Mucosa of descending colon (tissue), 3 donors: ENCODE measurements at regions of chr2 and their contacts with region 1.

Region 1: DNA sequence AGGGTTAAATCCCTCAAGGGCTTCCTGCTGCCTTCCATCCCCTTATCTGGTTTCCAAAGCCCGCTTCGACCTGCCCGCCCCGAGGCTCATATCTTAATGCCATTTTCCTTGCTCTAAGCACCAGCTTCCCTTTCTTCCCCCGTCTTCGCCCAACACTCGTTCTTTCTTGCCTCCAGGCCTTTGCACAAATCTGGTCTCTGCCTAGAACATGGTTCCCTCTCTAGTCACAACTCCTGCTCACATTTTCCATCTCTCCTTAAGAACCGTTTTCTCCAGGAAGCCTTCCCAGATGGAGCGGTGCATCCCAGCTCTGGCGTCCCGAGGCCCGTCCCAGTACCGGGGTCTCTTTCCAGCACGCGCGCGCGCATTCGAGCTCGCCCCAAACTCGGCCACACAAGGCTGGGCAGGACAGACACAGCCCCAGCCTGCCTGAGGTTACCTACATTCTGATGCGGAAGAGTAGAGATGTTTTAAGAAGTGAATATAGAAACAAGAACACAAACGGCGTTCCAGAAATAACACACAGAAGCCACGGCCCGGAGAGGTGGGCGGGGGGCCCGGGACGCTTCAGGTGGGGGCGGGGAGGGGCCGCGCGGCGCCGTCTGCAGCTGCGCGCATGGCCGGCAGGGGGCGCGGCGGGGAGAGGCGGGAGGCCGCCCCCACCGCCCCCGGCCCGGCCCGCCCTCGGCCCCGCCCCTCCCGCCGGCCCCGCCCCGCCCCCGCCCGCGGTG is at the start of gene DGKD:
- DNase-seq: peak; percentile 74 to 83 (median 82)
- ATAC-seq: peak; percentile 87
- H3K4me3 ChIP-seq: peak within 1 kb of the TSS; percentile 44
- H3K4me1 ChIP-seq: peaks cover 34% of the 10 kb centered on the region
- CTCF ChIP-seq: no peak
- total RNA-seq, gene DGKD: 81.8 to 159 (median 102) TPM

Region 2: DNA sequence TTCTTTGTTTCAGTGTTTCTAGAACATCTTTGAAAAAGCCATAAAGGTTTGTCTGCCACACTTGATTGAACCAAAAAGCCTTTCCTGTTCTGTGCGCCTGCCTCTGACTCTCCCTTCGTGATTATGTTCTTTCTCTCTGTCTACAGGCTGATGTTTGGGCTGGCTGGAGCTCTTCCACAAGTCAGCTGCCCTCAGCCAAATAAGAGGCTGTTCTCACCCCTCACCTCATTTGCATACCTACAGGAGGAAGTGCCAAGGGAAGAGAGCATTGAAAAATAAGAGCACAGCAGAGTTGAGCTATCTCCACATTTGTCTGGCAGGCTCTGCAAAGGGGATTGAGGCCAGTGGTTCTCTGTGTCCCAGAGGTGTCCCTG is 278.0 kb before region 1 on chr2:
- intact Hi-C with region 1: no loop called
- DNase-seq: no peak
- ATAC-seq: peak; percentile 81
- H3K4me3 ChIP-seq: no peak overlapping the region
- H3K4me1 ChIP-seq: peaks cover 14% of the 10 kb centered on the region
- CTCF ChIP-seq: no peak

Region 3: GRCh38 chr2:233449081-233449901 is 95.4 kb after region 1 on chr2:
- intact Hi-C with region 1: loop called (anchors 5 to 10 kb)
- DNase-seq: peak in 2 of 3 donors; percentile 48 to 51
- ATAC-seq: peak; percentile 50
- H3K4me3 ChIP-seq: no peak overlapping the region
- H3K4me1 ChIP-seq: no peaks in the 10 kb centered on the region
- CTCF ChIP-seq: no peak